Esophagus squamous epithelium (tissue), 5 donors: ENCODE measurements at regions of chr12 and their contacts with region 1.

Region 1: DNA sequence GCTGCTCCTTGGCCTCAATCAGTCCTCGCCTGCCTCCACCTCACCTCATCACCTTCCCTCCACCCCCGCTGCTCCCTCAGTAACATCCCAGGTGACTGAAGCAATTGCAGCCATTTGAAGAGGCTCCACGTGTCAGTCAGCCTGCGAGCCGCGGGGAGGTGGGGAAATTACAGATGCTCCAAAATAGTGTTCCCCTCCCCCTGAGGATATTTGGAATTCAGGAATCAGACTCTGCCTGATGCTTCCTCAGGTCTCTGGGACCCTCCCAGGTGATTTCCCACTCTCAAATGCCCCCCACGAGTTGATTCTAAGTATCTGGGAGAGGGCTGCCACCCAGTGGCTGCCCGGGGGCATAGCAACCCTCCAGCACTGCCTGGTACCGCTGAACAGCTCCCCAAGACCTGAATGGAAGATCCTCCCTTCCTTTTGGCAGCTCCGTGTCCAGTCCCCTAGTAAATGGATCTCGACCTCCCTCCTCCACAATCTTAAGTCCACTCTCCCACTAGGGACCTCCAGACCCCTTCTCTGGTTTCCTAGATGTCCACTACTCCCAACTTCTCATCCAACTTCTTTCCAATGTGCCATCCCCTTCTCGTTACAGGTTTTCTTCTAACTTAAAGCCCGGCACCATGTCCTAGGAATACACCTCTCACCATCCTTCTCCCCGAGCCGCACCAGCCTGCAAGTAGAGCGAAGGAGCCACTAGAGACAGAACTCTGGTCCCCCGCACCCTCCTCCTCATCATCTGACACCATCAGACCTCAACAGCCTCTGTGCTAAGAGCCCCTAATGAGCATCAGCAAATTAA is 1.4 kb upstream of the ASIC1 start:
- DNase-seq: no peak
- H3K4me3 ChIP-seq: peak overlapping the region in 2 of 4 donors; percentile 13 to 37
- H3K27ac ChIP-seq: no peak overlapping the region
- H3K4me1 ChIP-seq: peaks cover 18 to 34% (median 21%) of the 10 kb centered on the region in 3 donors
- H3K27me3 ChIP-seq: peaks cover 0 to 71% (median 0%) of the 10 kb centered on the region in 4 donors
- CTCF ChIP-seq: peak; percentile 78 to 94 (median 88)
- POLR2A ChIP-seq: no peak

Region 2: GRCh38 chr12:49644620-49644994 is 411.4 kb before region 1 on chr12:
- intact Hi-C with region 1: no loop called
- DNase-seq: no peak
- H3K4me3 ChIP-seq: no peak overlapping the region
- H3K27ac ChIP-seq: peak overlapping the region in 3 of 4 donors; percentile 36 to 81 (median 61)
- H3K4me1 ChIP-seq: peaks cover 0 to 76% (median 33%) of the 10 kb centered on the region in 3 donors
- H3K27me3 ChIP-seq: no peaks in the 10 kb centered on the region
- CTCF ChIP-seq: peak; percentile 81 to 95 (median 91)
- POLR2A ChIP-seq: no peak

Region 3: DNA sequence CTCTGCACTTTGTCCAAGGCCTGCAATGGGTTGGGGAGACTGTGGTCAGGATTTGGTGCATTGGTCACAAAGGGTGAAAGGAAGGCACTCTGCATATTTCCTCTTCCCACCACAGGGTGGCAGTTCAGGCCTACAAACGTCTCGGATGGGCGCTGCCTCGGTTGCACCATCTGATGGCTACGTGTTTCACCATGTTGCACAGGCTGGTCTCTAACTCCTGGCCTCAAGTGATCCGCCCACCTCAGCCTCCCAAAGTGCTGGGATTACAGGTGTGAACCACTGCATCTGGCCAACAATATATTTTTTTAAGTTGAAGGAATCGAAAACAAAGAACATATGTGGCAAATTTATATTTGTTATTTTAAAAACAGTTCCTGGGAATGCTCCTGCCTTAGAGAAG is 279.6 kb before region 1 on chr12:
- intact Hi-C with region 1: loop called (anchors 5 kb)
- DNase-seq: no peak
- H3K4me3 ChIP-seq: no peak overlapping the region
- H3K27ac ChIP-seq: no peak overlapping the region
- H3K4me1 ChIP-seq: peaks cover 0 to 22% (median 12%) of the 10 kb centered on the region in 3 donors
- H3K27me3 ChIP-seq: no peaks in the 10 kb centered on the region
- CTCF ChIP-seq: peak; percentile 46 to 87 (median 84)
- POLR2A ChIP-seq: no peak

Region 4: DNA sequence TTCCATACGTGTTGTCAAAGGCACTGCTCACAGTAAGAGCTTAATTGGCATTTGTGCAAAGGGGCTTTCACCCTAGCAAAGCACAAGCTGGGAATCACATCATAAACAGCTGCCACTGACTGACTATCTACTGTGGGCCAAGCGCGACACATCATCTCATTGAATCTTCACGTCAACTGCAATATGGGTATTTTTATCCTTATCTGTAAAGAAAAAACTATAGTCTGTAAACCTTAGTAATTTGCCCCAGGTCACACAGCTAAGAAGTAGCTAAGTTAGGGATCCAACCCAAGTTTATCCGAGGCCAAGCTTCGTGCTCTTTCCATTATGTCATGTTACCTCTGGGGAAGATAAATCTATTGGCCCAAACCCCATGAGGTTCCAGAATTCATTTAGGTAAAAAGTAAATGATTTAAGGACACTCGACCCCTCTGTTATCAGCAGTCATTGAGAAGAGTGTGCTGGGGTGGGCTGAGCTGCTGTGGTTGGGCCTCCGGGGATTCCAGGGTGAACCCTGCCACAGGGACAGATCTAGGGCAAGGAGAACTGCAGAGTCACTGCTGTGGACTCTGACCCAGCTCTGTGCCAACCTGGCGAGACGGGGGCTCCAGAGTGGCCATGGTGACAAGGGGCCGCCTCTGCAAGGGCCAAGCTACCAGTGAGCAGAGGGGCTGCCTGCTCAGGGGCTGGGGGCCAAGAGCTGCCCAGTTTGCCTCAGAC is 255.5 kb before region 1 on chr12:
- intact Hi-C with region 1: no loop called
- DNase-seq: no peak
- H3K4me3 ChIP-seq: no peak overlapping the region
- H3K27ac ChIP-seq: no peak overlapping the region
- H3K4me1 ChIP-seq: peaks cover 0 to 7% (median 0%) of the 10 kb centered on the region in 3 donors
- H3K27me3 ChIP-seq: no peaks in the 10 kb centered on the region
- CTCF ChIP-seq: no peak
- POLR2A ChIP-seq: no peak

Region 5: DNA sequence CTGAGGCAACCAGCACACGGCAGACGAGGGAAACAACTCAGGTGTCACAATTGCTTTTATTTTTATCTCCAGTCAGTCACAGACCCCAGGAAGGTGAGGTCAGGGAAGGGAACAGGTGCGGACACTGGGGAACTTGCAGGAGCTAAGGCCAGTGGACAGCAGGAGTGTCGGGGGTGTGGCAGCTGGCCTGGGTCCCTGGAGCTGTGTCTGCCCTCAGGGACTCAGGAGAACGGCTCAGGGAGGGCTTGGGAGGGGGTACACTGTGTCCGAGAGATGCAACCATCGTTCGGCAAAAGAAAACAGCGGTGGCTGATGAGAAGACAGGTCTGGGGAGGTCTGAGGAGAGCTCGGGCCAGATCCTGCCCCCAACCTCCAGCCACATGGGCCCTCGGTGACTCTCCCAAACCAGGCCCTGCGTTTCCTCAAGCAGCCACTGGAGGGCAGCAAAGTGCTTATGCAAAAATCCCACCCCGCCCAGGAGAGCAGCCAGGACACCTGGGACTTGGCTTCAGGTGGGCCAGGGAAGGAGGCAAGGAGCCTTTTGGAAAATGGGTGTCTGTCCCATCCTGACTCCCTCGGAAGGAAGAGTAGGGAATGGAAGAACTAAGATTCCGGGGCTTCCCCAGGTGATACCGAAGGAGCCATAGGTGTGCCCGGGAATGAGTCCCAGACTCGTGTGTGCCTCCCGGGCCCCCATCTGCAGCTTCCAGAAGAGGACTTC is 189.0 kb before region 1 on chr12:
- intact Hi-C with region 1: loop called (anchors 10 kb)
- DNase-seq: no peak
- H3K4me3 ChIP-seq: no peak overlapping the region
- H3K27ac ChIP-seq: peak overlapping the region; percentile 12 to 64 (median 42)
- H3K4me1 ChIP-seq: peaks cover 23 to 48% (median 24%) of the 10 kb centered on the region in 3 donors
- H3K27me3 ChIP-seq: peaks cover 0 to 6% (median 0%) of the 10 kb centered on the region in 4 donors
- CTCF ChIP-seq: peak; percentile 93 to 99 (median 98)
- POLR2A ChIP-seq: no peak

Region 6: GRCh38 chr12:49967042-49967776 is 88.8 kb before region 1 on chr12:
- intact Hi-C with region 1: loop called (anchors 5 kb)
- DNase-seq: peak; percentile 18
- H3K4me3 ChIP-seq: peak overlapping the region; percentile 25 to 66 (median 42)
- H3K27ac ChIP-seq: peak overlapping the region in 2 of 4 donors; percentile 16 to 37
- H3K4me1 ChIP-seq: peaks cover 18 to 43% (median 25%) of the 10 kb centered on the region in 3 donors
- H3K27me3 ChIP-seq: peaks cover 0 to 87% (median 0%) of the 10 kb centered on the region in 4 donors
- CTCF ChIP-seq: peak; percentile 78 to 97 (median 94)
- POLR2A ChIP-seq: no peak

Region 7: GRCh38 chr12:50246873-50247612 is 191.0 kb after region 1 on chr12:
- intact Hi-C with region 1: no loop called
- DNase-seq: no peak
- H3K4me3 ChIP-seq: no peak overlapping the region
- H3K27ac ChIP-seq: peak overlapping the region; percentile 80 to 93 (median 86)
- H3K4me1 ChIP-seq: peaks cover 15 to 87% (median 47%) of the 10 kb centered on the region in 3 donors
- H3K27me3 ChIP-seq: no peaks in the 10 kb centered on the region
- CTCF ChIP-seq: no peak
- POLR2A ChIP-seq: no peak

Region 8: GRCh38 chr12:50390284-50390683 is 334.2 kb after region 1 on chr12:
- intact Hi-C with region 1: no loop called
- DNase-seq: no peak
- H3K4me3 ChIP-seq: no peak overlapping the region
- H3K27ac ChIP-seq: peak overlapping the region in 1 of 4 donors; percentile 21
- H3K4me1 ChIP-seq: peaks cover 3 to 26% (median 18%) of the 10 kb centered on the region in 3 donors
- H3K27me3 ChIP-seq: no peaks in the 10 kb centered on the region
- CTCF ChIP-seq: no peak
- POLR2A ChIP-seq: no peak